GM10248 (cell line): ENCODE measurements at regions of chr14 and their contacts with region 1.

Region 1: DNA sequence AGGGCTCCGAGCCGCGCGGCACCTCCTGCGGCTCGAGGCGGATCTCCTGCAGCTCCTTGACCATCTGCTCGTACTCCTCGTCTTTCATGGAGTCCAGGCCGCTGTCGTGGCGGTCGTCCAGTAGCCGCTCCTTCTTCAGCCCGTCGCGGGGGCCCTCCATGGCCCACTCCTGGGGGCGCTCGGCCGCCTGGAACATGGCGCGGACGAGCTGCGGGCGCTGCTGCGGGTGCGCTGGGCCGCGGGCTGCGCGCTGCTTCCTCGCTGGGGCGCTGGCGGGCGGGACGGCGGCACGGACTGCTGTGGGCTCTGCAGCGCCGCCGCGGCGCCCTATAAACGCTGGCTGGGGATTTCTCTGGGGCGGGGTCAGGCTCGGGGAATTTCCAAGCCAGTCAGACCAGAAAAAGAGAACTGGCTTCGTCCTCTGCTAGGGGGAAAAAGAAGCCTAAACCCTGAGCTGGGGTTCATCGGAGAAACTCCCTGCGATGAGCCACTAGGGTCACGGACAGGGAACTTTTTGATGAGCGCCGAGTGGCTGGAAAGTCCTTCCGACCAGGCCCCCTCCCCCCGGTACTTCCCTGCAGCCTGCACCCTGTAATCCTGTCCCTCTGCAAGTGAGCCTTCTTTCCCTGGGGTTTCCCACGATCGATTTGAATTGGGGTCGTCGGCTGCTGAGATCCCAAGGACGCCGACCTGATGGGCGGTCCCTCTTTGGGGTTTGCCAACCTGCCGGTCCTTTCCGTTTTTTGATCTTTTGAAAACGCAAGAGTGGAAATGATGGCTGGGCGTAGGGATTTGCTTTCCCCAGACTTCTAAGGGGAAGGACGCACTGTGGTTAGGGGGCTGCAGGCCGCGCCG is at the start of gene NFKBIA:
- DNase-seq: peak; percentile 88
- CTCF ChIP-seq: peak; percentile 47

Region 2: GRCh38 chr14:35134328-35135123 is 270.1 kb before region 1 on chr14:
- CTCF ChIA-PET with region 1: interaction called, 356 read pairs
- POLR2A ChIA-PET with region 1: interaction called, 5 read pairs
- DNase-seq: no peak
- CTCF ChIP-seq: no peak

Region 3: GRCh38 chr14:35215110-35215876 is 189.4 kb before region 1 on chr14:
- CTCF ChIA-PET with region 1: interaction called, 24 read pairs
- POLR2A ChIA-PET with region 1: interaction called, 5 read pairs
- DNase-seq: peak; percentile 35
- CTCF ChIP-seq: peak; percentile 58

Region 4: DNA sequence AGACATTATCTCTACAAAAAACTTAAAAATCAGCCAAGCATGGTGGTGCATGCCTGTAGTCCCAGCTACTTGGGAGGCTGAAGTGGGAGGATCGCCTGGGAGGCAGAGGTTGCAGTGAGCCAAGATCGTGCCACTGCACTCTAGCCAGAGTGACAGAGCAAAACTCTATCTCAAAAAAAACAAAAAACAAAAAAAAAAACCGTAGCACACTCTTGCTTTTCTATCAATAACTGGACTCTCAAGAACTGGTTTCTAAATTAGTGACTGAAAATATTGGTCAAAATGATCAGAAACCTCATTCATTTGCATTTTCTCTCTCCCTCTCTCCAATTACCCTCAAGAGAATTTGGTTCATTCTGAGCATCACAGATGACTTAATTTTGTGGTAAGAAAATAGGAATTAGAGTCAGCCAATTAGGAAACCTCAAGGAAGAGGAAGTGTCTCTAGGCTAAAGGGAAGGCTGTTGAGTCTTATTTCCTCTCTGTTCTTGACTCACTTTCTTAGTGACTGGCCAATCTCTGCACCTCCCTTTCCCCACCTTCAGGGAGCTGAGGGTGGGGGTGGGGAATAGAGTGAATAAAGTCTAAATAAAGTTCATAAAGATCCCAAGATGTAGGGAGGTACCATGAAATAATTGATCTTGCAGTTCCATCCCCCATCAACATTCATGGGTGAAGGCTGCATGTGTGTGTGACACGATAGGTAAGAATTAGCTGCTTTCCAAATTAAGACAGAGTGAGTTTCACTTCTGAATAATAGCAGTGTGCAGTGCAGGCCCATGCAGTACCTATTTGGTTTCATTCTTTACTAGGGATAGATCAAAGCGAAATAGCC is 119.3 kb before region 1 on chr14:
- CTCF ChIA-PET with region 1: interaction called, 7 read pairs
- POLR2A ChIA-PET with region 1: interaction called, 41 read pairs
- DNase-seq: peak; percentile 68
- CTCF ChIP-seq: no peak

Region 5: GRCh38 chr14:35301735-35302528 is 102.7 kb before region 1 on chr14:
- CTCF ChIA-PET with region 1: interaction called, 8 read pairs
- POLR2A ChIA-PET with region 1: interaction called, 10 read pairs
- DNase-seq: no peak
- CTCF ChIP-seq: no peak

Region 6: GRCh38 chr14:35374273-35374681 is 30.4 kb before region 1 on chr14:
- CTCF ChIA-PET with region 1: interaction called, 5 read pairs
- POLR2A ChIA-PET with region 1: interaction called, 13 read pairs
- DNase-seq: no peak
- CTCF ChIP-seq: no peak

Region 7: DNA sequence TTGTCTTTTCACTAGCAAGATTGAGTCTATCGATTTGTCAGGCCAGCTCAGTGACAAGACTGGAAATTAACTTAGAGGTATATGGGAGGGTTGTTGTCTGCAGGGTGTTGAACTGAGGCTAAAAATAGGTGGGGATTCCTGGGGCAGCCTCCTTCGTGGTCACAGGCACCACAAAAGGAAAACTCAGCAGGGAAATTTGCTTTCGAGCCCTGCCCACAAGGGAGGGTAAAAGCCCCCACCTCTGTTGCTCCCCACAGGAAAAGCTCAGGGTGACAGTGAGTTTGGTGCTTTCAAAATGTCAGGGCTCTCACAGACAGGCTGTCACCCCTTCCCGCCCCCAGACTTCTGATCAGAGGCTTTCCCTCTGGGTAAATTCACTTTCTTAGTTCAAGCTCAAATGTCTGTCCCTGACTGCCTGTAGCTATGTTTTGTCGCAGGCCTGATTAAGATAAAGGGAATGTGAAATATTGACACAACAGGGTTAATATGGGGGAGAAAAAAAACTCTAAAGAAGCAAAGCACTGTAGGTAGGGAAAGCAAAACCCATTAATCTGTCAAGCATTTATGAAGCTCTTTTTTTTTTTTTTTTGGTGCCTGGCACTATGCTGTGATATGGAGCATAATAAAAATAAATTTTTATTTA is 11.6 kb after region 1 on chr14:
- CTCF ChIA-PET with region 1: interaction called, 61 read pairs
- POLR2A ChIA-PET with region 1: interaction called, 52 read pairs
- DNase-seq: no peak
- CTCF ChIP-seq: no peak